Activated CD4-positive, alpha-beta T cell treated with anti-CD3 and anti-CD28 coated beads for 36 hours (primary cell): ENCODE measurements at regions of chr20 and their contacts with region 1.

Region 1: DNA sequence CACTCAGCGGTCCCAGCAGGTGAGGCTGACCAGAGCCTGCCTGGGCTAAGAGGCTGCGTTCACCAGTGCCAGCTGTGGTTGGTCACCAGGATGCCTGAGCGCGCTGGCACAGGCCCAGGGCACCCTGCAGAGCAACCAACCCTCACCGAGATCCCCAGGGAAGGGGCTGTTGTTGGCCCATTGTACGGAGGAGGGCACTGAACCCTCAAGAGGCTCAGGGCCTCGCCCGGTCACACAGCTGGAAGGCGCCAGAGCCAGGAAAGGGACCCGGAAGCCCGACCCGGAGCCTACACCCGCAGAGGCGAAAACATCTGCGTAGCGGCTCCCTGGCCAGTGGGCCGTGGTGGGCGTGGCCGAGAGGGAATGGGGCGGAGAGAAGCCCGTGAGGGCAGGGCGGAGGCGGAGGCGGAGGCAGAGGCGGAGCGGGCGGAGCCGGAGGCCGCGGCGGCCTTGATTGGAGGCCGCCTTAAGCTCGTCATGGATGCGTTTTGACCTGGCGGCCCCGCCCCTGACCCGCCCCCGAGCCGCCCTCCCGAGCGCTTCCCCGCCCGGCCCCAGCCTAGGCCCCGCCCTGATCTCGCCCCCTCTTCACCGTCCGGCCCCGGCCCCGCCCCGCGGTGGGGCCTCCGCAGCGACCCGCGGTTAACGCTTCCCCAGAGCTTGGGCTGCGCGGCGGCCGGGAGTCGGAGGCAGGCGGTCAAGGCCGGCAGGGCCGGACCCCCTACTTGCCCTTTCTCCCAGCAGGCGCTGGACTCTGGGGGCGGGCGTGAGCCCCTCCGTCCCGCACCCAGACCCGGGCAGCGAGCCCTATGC is 2.2 kb upstream of the MRGBP start:
- DNase-seq: peak; percentile 98
- ATAC-seq: peak; percentile 75
- H3K4me3 Mint-ChIP-seq: peak overlapping the region; percentile 80
- H3K27ac Mint-ChIP-seq: peak overlapping the region; percentile 88
- H3K4me1 Mint-ChIP-seq: peaks cover 31% of the 10 kb centered on the region
- H3K27me3 Mint-ChIP-seq: no peaks in the 10 kb centered on the region

Region 2: GRCh38 chr20:62065669-62066338 is 728.3 kb before region 1 on chr20 and contains the start of gene TAF4:
- CTCF ChIA-PET with region 1: no interaction called
- POLR2A ChIA-PET with region 1: no interaction called
- intact Hi-C with region 1: loop called in 1 of 2 experiments (anchors 10 kb)
- DNase-seq: peak; percentile 87
- ATAC-seq: peak; percentile 79
- H3K4me3 Mint-ChIP-seq: peak within 1 kb of the TSS; percentile 75
- H3K27ac Mint-ChIP-seq: peak within 1 kb of the TSS; percentile 78
- H3K4me1 Mint-ChIP-seq: peaks cover 53% of the 10 kb centered on the region
- H3K27me3 Mint-ChIP-seq: no peaks in the 10 kb centered on the region
- total RNA-seq, gene TAF4: 15.4 to 27.1 TPM

Region 3: GRCh38 chr20:62302341-62303058 is 491.6 kb before region 1 on chr20 and contains the start of gene ADRM1:
- CTCF ChIA-PET with region 1: no interaction called
- POLR2A ChIA-PET with region 1: no interaction called
- intact Hi-C with region 1: loop called (anchors 1 to 5 kb)
- DNase-seq: peak; percentile 98
- ATAC-seq: peak; percentile 83
- H3K4me3 Mint-ChIP-seq: peak within 1 kb of the TSS; percentile 91
- H3K27ac Mint-ChIP-seq: peak within 1 kb of the TSS; percentile 99
- H3K4me1 Mint-ChIP-seq: peaks cover 22% of the 10 kb centered on the region
- H3K27me3 Mint-ChIP-seq: no peaks in the 10 kb centered on the region
- total RNA-seq, gene ADRM1: 92.8 to 103 TPM

Region 4: GRCh38 chr20:62523473-62524203 is 270.5 kb before region 1 on chr20:
- CTCF ChIA-PET with region 1: interaction called, 4 read pairs
- POLR2A ChIA-PET with region 1: no interaction called
- intact Hi-C with region 1: loop called in 1 of 2 experiments (anchors 1 kb)
- DNase-seq: peak; percentile 92
- ATAC-seq: peak; percentile 99
- H3K4me3 Mint-ChIP-seq: no peak overlapping the region
- H3K27ac Mint-ChIP-seq: peak overlapping the region; percentile 47
- H3K4me1 Mint-ChIP-seq: peaks cover 14% of the 10 kb centered on the region
- H3K27me3 Mint-ChIP-seq: peaks cover 7% of the 10 kb centered on the region

Region 5: DNA sequence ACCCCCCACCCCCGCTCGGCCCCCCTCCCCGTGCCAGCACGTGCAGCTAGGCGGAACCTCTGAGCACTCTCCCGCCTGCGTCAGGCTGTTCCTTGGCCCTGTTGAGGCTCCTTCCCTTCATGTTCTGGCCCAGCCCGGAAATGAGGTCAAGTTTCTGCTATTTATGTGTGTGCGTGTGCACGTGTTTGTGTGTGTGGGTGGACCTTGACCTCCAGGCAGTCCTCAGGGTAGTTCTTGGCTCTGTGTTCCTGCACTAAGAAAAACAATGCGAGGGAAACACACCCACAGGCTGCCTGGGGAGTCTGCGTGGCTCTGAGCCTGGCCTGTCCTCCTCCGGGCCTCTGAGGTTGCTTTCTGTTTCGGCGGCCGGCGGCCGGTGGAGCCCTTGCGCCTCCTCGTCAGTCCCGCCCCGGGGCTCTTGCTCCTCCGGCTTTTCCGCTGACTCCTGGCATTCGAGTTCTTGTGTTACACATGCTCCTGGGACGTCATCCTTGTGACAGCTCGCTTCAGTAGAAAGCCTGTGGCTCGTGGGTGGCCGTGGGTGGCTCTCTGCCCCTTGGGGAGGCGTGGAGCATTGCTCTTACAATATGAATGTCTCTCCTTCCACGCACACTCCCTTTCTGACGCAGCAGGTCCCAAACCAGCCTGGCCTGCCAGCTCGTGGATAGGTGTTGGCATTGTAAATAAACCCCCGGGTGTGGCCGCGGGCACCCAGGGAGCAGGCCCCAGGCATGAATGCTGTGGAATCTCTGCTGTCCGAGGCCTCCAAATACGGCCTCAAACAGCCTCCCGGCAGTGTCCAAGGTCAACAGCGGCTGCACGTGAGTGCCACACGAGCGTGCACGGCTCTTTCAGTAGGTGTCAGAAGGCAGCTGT is 141.8 kb before region 1 on chr20:
- CTCF ChIA-PET with region 1: interaction called, 11 read pairs
- POLR2A ChIA-PET with region 1: no interaction called
- intact Hi-C with region 1: loop called in 1 of 2 experiments (anchors 2 kb)
- DNase-seq: peak; percentile 82
- ATAC-seq: peak; percentile 81
- H3K4me3 Mint-ChIP-seq: peak overlapping the region; percentile 65
- H3K27ac Mint-ChIP-seq: peak overlapping the region; percentile 61
- H3K4me1 Mint-ChIP-seq: peaks cover 35% of the 10 kb centered on the region
- H3K27me3 Mint-ChIP-seq: no peaks in the 10 kb centered on the region

Region 6: DNA sequence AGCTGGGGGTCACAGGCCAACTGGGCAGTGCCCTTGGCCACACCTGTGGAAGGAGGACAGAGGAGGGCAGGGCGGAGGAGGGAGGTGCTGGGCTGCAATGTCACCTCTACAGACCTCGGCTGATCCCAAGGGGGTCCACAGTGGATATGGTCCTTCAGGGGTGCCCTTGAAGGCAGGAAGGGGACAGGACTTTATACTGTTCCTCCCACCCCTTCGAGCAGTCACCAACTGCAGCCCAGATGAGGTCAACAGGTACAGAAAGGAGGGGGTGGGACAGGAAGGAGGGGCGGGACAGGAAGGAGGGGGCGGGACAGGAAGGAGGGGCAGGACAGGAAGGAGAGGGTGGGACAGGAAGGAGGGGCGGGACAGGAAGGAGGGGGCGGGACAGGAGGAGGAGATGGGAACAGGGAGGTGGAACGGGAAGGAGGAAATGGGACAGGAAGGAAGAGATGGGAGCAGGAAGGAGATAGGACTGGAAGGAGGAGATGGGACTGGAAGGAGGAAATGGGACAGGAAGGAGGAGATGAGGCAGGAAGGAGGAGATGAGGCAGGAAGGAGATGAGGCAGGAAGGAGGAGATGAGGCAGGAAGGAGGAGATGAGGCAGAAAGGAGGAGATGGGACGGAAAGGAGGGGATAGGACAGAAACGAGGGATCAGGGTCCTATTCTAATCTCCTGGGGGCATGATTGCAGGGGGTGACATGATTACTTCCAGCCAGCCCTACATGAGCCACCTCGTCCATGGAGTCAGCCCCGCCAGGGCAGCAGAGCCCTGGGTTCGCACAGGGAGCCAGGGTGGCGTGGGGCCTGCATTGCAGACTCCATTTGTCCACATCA is 17.2 kb before region 1 on chr20:
- CTCF ChIA-PET with region 1: interaction called, 6 read pairs
- POLR2A ChIA-PET with region 1: no interaction called
- intact Hi-C with region 1: loop called (anchors 1 to 2 kb)
- DNase-seq: peak; percentile 80
- ATAC-seq: peak; percentile 87
- H3K4me3 Mint-ChIP-seq: peak overlapping the region; percentile 48
- H3K27ac Mint-ChIP-seq: peak overlapping the region; percentile 93
- H3K4me1 Mint-ChIP-seq: peaks cover 52% of the 10 kb centered on the region
- H3K27me3 Mint-ChIP-seq: no peaks in the 10 kb centered on the region

Region 7: GRCh38 chr20:62937366-62938104 is 143.4 kb after region 1 on chr20:
- CTCF ChIA-PET with region 1: no interaction called
- POLR2A ChIA-PET with region 1: no interaction called
- intact Hi-C with region 1: loop called in 1 of 2 experiments (anchors 1 kb)
- DNase-seq: peak; percentile 99
- ATAC-seq: peak; percentile 90
- H3K4me3 Mint-ChIP-seq: no peak overlapping the region
- H3K27ac Mint-ChIP-seq: peak overlapping the region; percentile 96
- H3K4me1 Mint-ChIP-seq: peaks cover 44% of the 10 kb centered on the region
- H3K27me3 Mint-ChIP-seq: no peaks in the 10 kb centered on the region

Region 8: DNA sequence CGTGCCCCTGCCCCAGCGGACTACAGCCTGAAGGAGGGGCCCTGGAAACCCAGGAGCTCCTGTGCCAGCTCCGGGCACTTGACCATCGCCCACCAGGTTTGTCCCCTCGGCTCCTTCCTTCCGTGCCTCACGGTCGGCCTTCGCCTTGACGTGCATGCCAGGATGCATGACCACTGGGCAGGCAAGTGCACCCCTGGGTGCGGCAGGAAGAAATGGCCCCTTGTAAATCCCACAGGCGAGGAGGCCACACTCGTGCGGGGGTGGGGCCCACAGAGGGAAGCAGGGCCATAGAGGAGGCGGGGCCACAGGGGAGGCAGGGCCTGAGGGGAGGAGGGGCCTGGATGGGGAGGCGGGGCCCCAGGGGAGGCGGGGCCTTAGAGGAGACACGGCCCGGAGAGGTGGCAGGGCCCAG is 340.1 kb after region 1 on chr20:
- CTCF ChIA-PET with region 1: no interaction called
- POLR2A ChIA-PET with region 1: no interaction called
- intact Hi-C with region 1: no loop called
- DNase-seq: peak; percentile 50
- ATAC-seq: peak; percentile 18
- H3K4me3 Mint-ChIP-seq: no peak overlapping the region
- H3K27ac Mint-ChIP-seq: no peak overlapping the region
- H3K4me1 Mint-ChIP-seq: no peaks in the 10 kb centered on the region
- H3K27me3 Mint-ChIP-seq: peaks cover 12% of the 10 kb centered on the region